HepG2 (cell line): ENCODE measurements at regions of chr4 and their contacts with region 1.

Region 1: GRCh38 chr4:114250439-114250891 is 271.0 kb upstream of the ARSJ start:
- DNase-seq: no peak
- ATAC-seq: no peak
- H3K4me3 ChIP-seq: no peak overlapping the region
- H3K27ac ChIP-seq: no peak overlapping the region
- H3K4me1 ChIP-seq: no peaks in the 10 kb centered on the region
- H3K27me3 ChIP-seq: no peaks in the 10 kb centered on the region; a peak in 1 of 5 replicates
- CTCF ChIP-seq: no peak
- EP300 ChIP-seq: no peak
- POLR2A ChIP-seq: no peak
- RAD21 ChIP-seq: no peak

Region 2: DNA sequence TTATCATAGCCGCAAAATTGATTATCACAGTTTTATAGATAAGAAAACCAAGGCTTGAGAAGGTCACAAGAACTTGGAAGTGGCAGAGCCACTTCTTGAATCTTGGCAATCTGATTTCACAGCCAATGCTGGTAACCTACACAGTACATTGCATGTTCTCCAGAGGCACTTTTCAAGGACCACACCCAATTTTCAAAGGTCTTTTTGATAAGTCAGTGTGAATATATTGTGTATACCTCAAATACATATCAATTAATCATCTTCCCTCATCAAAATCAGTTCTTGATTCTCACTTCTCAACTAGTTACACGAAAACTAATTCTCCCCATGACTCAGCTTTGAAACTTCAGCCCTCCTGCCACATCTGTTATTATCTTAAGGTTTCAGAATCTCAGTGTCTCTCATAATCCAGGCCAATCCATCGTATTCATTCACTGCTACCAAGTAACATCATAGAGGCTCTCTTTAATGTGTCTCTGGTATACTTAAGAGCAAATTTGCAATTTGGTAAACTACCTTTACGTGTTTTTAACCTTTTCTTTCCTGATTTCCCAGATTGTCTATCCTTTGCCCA is 505.7 kb before region 1 on chr4:
- CTCF ChIA-PET with region 1: no interaction called
- POLR2A ChIA-PET with region 1: no interaction called
- in situ Hi-C with region 1: no loop called
- intact Hi-C with region 1: no loop called
- DNase-seq: no peak
- ATAC-seq: no peak
- H3K4me3 ChIP-seq: no peak overlapping the region
- H3K27ac ChIP-seq: no peak overlapping the region
- H3K4me1 ChIP-seq: peaks cover 16% of the 10 kb centered on the region
- H3K27me3 ChIP-seq: no peaks in the 10 kb centered on the region
- CTCF ChIP-seq: no peak
- EP300 ChIP-seq: no peak
- POLR2A ChIP-seq: no peak
- RAD21 ChIP-seq: no peak

Region 3: DNA sequence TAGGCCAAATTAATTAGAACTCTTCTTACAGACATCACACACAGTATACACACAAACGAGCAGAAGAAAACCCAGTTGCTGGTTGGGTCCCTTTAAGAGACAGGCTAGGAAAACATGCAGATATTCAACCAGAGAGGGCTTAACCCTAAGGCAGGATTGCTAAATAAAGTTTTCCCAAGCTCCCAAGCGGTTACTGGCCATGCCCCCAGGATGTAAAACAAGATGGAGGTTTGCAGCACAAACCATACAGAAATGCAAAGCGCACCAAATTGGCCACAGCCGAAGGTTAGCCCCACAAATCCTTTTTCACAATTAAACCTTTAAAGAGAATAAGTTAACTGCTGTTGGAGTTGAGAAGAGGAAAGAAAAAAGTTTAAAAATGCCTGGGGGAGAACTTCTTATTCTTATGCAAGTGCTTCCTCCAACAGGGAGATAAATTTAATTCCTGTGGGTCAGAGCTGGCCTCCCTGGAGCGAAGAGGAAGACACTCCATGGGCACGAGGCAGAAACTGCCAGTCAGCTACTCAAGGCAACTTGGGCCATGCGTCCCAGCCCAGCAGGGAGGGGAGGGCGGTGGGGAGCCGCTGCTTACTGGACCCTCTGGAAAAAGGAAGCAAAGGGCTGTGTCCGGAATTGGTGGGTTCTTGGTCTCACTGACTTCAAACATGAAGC is 103.4 kb before region 1 on chr4:
- CTCF ChIA-PET with region 1: no interaction called
- POLR2A ChIA-PET with region 1: no interaction called
- in situ Hi-C with region 1: no loop called
- intact Hi-C with region 1: no loop called
- DNase-seq: no peak
- ATAC-seq: no peak
- H3K4me3 ChIP-seq: no peak overlapping the region
- H3K27ac ChIP-seq: no peak overlapping the region
- H3K4me1 ChIP-seq: no peaks in the 10 kb centered on the region
- H3K27me3 ChIP-seq: no peaks in the 10 kb centered on the region
- CTCF ChIP-seq: no peak
- EP300 ChIP-seq: no peak
- POLR2A ChIP-seq: no peak
- RAD21 ChIP-seq: no peak

Region 4: DNA sequence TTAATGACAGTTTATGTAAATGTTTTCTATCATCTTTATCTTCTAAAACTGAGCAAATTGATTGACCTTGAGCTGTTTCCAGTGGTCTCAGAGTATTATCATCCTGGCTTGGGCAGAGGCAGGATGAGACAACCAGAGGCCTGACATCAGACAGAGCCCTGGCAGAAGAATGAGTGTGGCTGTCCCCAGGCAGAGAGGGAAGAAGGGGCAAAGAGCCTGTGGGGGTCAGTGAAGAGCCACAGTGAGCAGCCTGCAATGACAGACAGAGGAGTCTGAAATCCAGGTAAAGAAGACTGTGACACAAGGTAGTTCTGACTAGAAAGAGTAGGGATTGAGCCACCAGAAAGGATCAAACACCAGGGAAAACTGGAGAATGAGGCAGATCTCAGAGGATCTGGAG is 88.7 kb before region 1 on chr4:
- CTCF ChIA-PET with region 1: no interaction called
- POLR2A ChIA-PET with region 1: no interaction called
- in situ Hi-C with region 1: no loop called
- intact Hi-C with region 1: no loop called
- DNase-seq: no peak
- ATAC-seq: peak; percentile 67; the same call in 2 of the 3 replicates
- H3K4me3 ChIP-seq: no peak overlapping the region
- H3K27ac ChIP-seq: no peak overlapping the region
- H3K4me1 ChIP-seq: no peaks in the 10 kb centered on the region
- H3K27me3 ChIP-seq: no peaks in the 10 kb centered on the region
- CTCF ChIP-seq: peak; percentile 20; the same call in 1 of the 2 replicates
- EP300 ChIP-seq: no peak
- POLR2A ChIP-seq: no peak
- RAD21 ChIP-seq: no peak

Region 5: GRCh38 chr4:114263233-114263632 is 12.8 kb after region 1 on chr4:
- CTCF ChIA-PET with region 1: no interaction called
- POLR2A ChIA-PET with region 1: no interaction called
- in situ Hi-C with region 1: no loop called
- intact Hi-C with region 1: loop called (anchors 1 kb)
- DNase-seq: no peak
- ATAC-seq: no peak
- H3K4me3 ChIP-seq: no peak overlapping the region
- H3K27ac ChIP-seq: no peak overlapping the region
- H3K4me1 ChIP-seq: peaks cover 9% of the 10 kb centered on the region
- H3K27me3 ChIP-seq: no peaks in the 10 kb centered on the region
- CTCF ChIP-seq: no peak
- EP300 ChIP-seq: no peak
- POLR2A ChIP-seq: no peak
- RAD21 ChIP-seq: no peak